ENCODE measurements at regions of chr12 and their contacts with region 1.

Region 1: DNA sequence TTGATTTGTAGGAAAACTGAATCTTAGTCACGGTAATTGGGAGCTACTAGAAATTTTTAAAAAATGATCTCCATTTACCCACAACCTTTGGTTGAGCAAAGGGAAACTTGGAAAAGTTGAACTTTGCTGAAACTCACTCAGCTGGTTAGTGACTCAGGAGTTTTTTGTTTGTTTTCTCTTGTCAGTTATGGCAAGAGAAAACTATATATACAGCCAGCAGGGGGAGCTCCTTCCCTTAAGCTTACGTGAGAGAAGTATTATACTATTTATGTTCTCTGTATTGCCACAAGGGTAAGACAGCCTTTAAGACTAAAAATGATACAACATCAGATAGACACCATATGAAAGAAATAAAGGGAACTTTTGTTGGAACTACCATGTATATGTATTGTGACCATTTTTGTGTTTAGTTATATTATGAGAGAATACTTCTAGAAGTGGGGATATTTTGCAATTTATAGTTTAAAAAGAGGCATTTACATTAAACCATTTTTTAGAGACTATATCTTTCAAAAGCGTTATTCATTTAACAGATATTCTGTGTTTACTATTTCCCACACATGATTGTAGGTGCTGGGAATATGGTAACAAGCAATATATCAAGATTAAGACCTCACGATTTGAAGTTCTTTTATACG is 28.1 kb upstream of the TBC1D30 start:
- H3K4me3 ChIP-seq: no peak overlapping the region
- H3K27ac ChIP-seq: no peak overlapping the region
- H3K4me1 ChIP-seq: no peaks in the 10 kb centered on the region
- CTCF ChIP-seq: peak; percentile 51

Region 2: DNA sequence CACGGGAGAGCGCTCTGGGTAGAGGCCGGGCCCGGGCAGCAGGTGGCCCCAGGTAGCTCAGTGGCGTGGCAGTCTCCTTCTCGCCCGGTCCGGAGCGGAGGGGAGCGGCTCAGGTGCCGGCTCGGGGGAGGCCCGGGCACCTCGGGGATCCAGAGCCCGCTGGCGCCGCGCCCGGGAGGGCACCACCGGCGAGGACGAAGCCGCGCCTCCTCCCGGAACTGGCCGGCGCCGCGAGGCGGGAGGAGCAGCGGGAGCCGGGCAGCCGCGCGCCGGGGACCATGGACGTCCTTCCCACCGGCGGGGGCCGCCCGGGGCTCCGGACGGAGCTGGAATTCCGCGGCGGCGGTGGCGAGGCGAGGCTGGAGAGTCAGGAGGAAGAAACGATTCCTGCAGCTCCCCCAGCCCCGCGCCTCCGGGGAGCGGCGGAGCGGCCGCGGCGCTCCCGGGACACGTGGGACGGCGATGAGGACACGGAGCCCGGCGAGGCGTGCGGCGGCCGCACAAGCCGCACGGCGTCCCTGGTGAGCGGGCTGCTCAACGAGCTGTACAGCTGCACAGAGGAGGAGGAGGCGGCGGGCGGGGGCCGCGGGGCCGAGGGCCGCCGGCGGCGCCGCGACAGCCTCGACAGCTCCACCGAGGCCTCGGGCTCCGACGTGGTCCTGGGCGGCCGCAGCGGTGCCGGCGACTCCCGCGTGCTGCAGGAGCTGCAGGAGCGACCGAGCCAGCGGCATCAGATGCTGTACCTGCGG is 15.6 kb before region 1 on chr12:
- CTCF ChIA-PET with region 1: interaction called, 31 read pairs
- POLR2A ChIA-PET with region 1: interaction called, 4 read pairs
- H3K4me3 ChIP-seq: peak overlapping the region; percentile 61
- H3K27ac ChIP-seq: peak overlapping the region; percentile 79
- H3K4me1 ChIP-seq: 0 out of 2 replicates have a peak, but pooled peaks cover 3% of the 10 kb centered on the region
- CTCF ChIP-seq: peak; percentile 47

Region 3: DNA sequence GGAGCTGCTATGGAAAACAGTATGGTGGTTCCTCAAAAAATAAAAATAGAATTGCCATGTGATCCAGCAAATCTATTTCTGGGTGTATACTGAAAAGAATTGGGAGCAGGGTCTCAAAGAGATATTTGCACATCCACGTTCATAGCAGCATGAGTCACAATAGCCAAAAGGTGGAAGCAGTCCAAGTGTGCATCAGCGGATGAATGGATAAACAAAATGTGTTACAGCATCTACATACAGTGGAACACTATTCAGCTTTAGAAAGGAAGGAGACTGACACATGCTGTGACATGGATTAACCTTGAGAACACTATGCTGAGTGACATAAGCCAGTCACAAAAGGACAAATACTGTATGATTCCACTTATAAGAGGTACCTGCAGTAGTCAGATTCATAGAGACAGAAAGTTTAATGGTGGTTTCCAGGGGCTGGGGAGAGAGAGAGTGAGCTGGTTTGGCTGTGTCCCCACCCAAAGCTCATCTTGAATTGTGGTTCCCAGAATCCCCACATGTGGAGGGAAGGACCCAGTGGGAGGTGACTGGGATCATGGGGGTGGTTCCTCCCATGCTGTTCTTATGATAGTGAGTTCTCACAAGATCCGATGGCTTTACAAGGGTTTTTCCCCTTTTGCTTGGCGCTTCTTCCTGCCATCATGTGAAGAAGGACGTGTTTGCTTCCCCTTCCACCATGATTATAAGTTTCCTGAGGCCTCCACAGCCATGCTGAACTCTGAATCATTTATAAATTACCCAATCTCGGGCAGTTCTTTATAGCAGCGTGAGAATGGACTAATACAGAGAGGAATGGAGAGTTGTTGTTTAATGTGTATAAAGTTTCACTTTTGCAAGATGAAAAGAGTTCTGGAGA is 10.5 kb after region 1 on chr12:
- CTCF ChIA-PET with region 1: interaction called, 50 read pairs
- POLR2A ChIA-PET with region 1: no interaction called
- H3K4me3 ChIP-seq: no peak overlapping the region
- H3K27ac ChIP-seq: no peak overlapping the region
- H3K4me1 ChIP-seq: peaks cover 10% of the 10 kb centered on the region; the same call in 1 of the 2 replicates
- CTCF ChIP-seq: no peak

Region 4: GRCh38 chr12:65121049-65121955 is 325.0 kb after region 1 on chr12 and contains the start of gene WIF1:
- CTCF ChIA-PET with region 1: interaction called, 14 read pairs
- POLR2A ChIA-PET with region 1: no interaction called
- H3K4me3 ChIP-seq: peak within 1 kb of the TSS; percentile 34
- H3K27ac ChIP-seq: no peak within 1 kb of the TSS; the same call in 1 of the 2 replicates
- H3K4me1 ChIP-seq: peaks cover 7% of the 10 kb centered on the region
- CTCF ChIP-seq: peak; percentile 29; the same call in 1 of the 2 replicates